T-cell (primary cell): ENCODE measurements at regions of chr4 and their contacts with region 1.

Region 1: DNA sequence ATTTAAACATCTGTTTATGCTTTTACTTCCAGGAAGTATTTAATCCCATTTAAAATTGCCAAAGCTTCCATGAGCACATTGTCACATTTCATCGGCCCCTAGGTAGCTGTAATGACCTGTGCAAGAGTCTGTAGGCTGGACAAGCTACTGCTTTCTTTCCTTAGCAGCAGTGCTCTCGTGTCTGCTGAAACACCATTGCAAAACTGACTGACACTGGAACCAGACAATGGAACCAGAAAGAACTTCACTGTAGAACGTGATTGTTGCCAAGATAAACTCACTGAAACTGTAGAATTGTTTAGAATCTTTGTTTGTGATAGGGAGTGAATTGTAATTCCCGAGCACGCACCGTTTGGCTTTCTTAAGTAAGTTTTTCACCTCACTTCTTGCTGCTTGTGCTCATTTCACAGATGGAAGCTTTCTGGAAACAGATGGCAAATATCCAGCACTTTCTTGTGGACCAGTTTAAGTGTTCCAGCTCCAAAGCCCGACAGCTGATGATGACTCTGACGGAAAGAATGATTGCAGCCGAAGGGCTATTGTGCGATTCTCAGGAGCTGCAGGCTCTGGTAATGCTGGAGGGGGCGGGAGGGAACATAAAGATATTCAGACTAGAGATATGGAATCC is 36.9 kb downstream of the EVC start:
- DNase-seq: no peak
- ATAC-seq: no peak
- H3K4me3 ChIP-seq: no peak overlapping the region
- H3K4me3 Mint-ChIP-seq: no peak overlapping the region
- H3K27ac ChIP-seq: no peak overlapping the region
- H3K27ac Mint-ChIP-seq: no peak overlapping the region
- H3K4me1 ChIP-seq: no peaks in the 10 kb centered on the region
- H3K4me1 Mint-ChIP-seq: no peaks in the 10 kb centered on the region
- H3K27me3 ChIP-seq: peaks cover 0 to 5% of the 10 kb centered on the region in 2 experiments
- H3K27me3 Mint-ChIP-seq: no peaks in the 10 kb centered on the region

Region 2: DNA sequence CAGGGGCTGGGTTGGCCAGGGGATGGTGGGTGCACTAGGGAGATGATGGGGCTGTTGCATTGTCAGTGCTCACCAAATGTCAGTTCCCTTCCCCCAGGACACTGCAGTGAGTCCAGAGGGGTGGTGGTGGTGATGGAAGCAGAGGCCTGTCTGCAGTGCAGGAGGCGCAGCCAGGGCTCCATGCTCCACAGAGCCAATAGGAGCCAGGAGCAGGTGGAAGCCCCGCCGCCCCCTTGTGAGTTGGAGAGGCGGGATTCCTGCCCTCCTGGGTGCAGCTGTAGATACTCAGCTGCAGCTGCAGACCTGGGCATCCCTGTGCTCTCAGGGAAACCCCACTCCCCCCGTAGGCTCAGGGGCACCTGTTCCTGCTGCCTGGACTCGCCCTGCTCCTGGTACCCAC is 324.2 kb before region 1 on chr4:
- CTCF ChIA-PET with region 1: no interaction called
- POLR2A ChIA-PET with region 1: no interaction called
- DNase-seq: no peak
- ATAC-seq: no peak
- H3K4me3 ChIP-seq: no peak overlapping the region
- H3K4me3 Mint-ChIP-seq: no peak overlapping the region
- H3K27ac ChIP-seq: no peak overlapping the region
- H3K27ac Mint-ChIP-seq: no peak overlapping the region
- H3K4me1 ChIP-seq: no peaks in the 10 kb centered on the region
- H3K4me1 Mint-ChIP-seq: no peaks in the 10 kb centered on the region
- H3K27me3 ChIP-seq: peaks cover 0 to 12% of the 10 kb centered on the region in 2 experiments
- H3K27me3 Mint-ChIP-seq: peaks cover 0 to 4% of the 10 kb centered on the region in 2 donors

Region 3: GRCh38 chr4:5715357-5715756 is 32.5 kb before region 1 on chr4:
- CTCF ChIA-PET with region 1: no interaction called
- POLR2A ChIA-PET with region 1: interaction called in 1 of 2 experiments, 10 read pairs
- DNase-seq: no peak
- ATAC-seq: no peak
- H3K4me3 ChIP-seq: no peak overlapping the region
- H3K4me3 Mint-ChIP-seq: no peak overlapping the region
- H3K27ac ChIP-seq: no peak overlapping the region
- H3K27ac Mint-ChIP-seq: no peak overlapping the region
- H3K4me1 ChIP-seq: peaks cover 0 to 8% of the 10 kb centered on the region in 2 experiments
- H3K4me1 Mint-ChIP-seq: peaks cover 4 to 7% (median 6%) of the 10 kb centered on the region in 3 donors
- H3K27me3 ChIP-seq: peaks cover 9 to 20% of the 10 kb centered on the region in 2 experiments
- H3K27me3 Mint-ChIP-seq: peaks cover 21 to 34% of the 10 kb centered on the region in 2 donors

Region 4: GRCh38 chr4:5773271-5773555 is 25.4 kb after region 1 on chr4:
- CTCF ChIA-PET with region 1: no interaction called
- POLR2A ChIA-PET with region 1: no interaction called
- DNase-seq: no peak
- ATAC-seq: no peak
- H3K4me3 ChIP-seq: no peak overlapping the region
- H3K4me3 Mint-ChIP-seq: no peak overlapping the region
- H3K27ac ChIP-seq: no peak overlapping the region
- H3K27ac Mint-ChIP-seq: no peak overlapping the region
- H3K4me1 ChIP-seq: no peaks in the 10 kb centered on the region
- H3K4me1 Mint-ChIP-seq: no peaks in the 10 kb centered on the region
- H3K27me3 ChIP-seq: peaks cover 0 to 7% of the 10 kb centered on the region in 2 experiments
- H3K27me3 Mint-ChIP-seq: no peaks in the 10 kb centered on the region

Region 5: DNA sequence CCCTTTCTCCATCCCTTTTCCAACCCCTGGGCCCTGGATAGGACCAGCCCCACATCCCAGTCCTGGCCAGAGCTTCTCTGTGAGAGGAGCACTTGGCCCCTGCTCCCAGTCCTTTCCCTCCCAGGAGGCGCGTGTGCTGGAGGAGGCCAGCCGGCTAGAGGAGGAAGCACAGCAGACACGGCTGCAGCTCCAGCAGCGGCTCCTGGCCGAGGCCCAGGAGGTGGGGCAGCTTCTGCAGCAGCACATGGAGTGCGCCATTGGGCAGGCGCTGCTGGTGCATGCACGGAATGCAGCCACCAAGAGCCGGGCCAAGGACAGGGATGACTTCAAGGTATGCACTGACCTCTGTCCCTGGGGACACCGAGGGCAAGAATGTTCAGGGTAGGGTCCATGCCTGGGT is 50.6 kb after region 1 on chr4:
- CTCF ChIA-PET with region 1: no interaction called
- POLR2A ChIA-PET with region 1: no interaction called
- DNase-seq: no peak
- ATAC-seq: no peak
- H3K4me3 ChIP-seq: no peak overlapping the region
- H3K4me3 Mint-ChIP-seq: no peak overlapping the region
- H3K27ac ChIP-seq: no peak overlapping the region
- H3K27ac Mint-ChIP-seq: no peak overlapping the region
- H3K4me1 ChIP-seq: no peaks in the 10 kb centered on the region
- H3K4me1 Mint-ChIP-seq: no peaks in the 10 kb centered on the region
- H3K27me3 ChIP-seq: peaks cover 0 to 8% of the 10 kb centered on the region in 2 experiments
- H3K27me3 Mint-ChIP-seq: peaks cover 0 to 3% of the 10 kb centered on the region in 2 donors

Region 6: GRCh38 chr4:5824635-5825034 is 76.8 kb after region 1 on chr4:
- CTCF ChIA-PET with region 1: no interaction called
- POLR2A ChIA-PET with region 1: no interaction called
- DNase-seq: no peak
- ATAC-seq: no peak
- H3K4me3 ChIP-seq: no peak overlapping the region
- H3K4me3 Mint-ChIP-seq: no peak overlapping the region
- H3K27ac ChIP-seq: no peak overlapping the region
- H3K27ac Mint-ChIP-seq: no peak overlapping the region
- H3K4me1 ChIP-seq: peaks cover 0 to 5% of the 10 kb centered on the region in 2 experiments
- H3K4me1 Mint-ChIP-seq: peaks cover 0 to 7% (median 6%) of the 10 kb centered on the region in 3 donors
- H3K27me3 ChIP-seq: peaks cover 0 to 8% of the 10 kb centered on the region in 2 experiments
- H3K27me3 Mint-ChIP-seq: peaks cover 0 to 2% of the 10 kb centered on the region in 2 donors